ENCODE measurements at regions of chr18 and their contacts with region 1.

Region 1: GRCh38 chr18:23131693-23132319 is 3.5 kb upstream of the CABLES1 start:
- DNase-seq: peak; percentile 51 to 62
- H3K4me3 ChIP-seq: no peak overlapping the region
- H3K27ac ChIP-seq: peak overlapping the region in 1 of 3 donors; percentile 16
- H3K4me1 ChIP-seq: peaks cover 18 to 20% of the 10 kb centered on the region in 2 donors
- H3K27me3 ChIP-seq: no peaks in the 10 kb centered on the region
- CTCF ChIP-seq: peak; percentile 75 to 82 (median 78)
- POLR2A ChIP-seq: no peak

Region 2: DNA sequence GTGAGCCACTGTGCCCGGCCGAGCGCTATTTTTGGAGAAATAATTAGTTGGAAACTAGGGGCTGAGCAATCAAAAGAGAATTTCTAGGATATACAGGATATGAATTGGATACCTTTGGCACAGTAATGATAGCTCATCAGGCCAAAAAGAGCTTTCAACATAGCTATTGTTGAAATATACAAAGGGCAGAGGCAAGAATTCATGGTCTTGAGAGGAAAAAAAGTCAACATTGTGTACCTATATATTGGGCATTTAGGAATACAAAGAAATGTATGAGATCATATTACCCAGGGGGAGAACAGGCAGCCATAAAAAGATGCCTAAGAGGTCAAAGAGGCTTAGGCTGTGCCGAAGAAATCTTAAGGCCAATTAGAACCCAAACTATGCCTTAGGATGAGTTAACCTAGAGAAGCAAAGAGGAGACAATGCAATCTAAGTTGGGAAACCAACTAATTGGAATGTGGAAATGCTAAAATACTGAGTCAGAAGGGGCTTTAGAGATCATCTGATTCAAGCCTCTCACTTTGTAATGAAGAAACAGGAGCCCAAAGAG is 99.7 kb before region 1 on chr18:
- intact Hi-C with region 1: loop called (anchors 10 kb)
- DNase-seq: no peak
- H3K4me3 ChIP-seq: no peak overlapping the region
- H3K27ac ChIP-seq: no peak overlapping the region
- H3K4me1 ChIP-seq: no peaks in the 10 kb centered on the region
- H3K27me3 ChIP-seq: no peaks in the 10 kb centered on the region
- CTCF ChIP-seq: no peak
- POLR2A ChIP-seq: no peak

Region 3: GRCh38 chr18:23099621-23100020 is 32.2 kb before region 1 on chr18:
- intact Hi-C with region 1: no loop called
- DNase-seq: no peak
- H3K4me3 ChIP-seq: no peak overlapping the region
- H3K27ac ChIP-seq: no peak overlapping the region
- H3K4me1 ChIP-seq: peaks cover 0 to 3% of the 10 kb centered on the region in 2 donors
- H3K27me3 ChIP-seq: no peaks in the 10 kb centered on the region
- CTCF ChIP-seq: no peak
- POLR2A ChIP-seq: no peak

Region 4: GRCh38 chr18:23207191-23207955 is 75.6 kb after region 1 on chr18:
- intact Hi-C with region 1: no loop called
- DNase-seq: no peak
- H3K4me3 ChIP-seq: no peak overlapping the region
- H3K27ac ChIP-seq: no peak overlapping the region
- H3K4me1 ChIP-seq: peaks cover 7 to 21% of the 10 kb centered on the region in 2 donors
- H3K27me3 ChIP-seq: no peaks in the 10 kb centered on the region
- CTCF ChIP-seq: peak in 1 of 6 experiments; percentile 8
- POLR2A ChIP-seq: no peak

Region 5: DNA sequence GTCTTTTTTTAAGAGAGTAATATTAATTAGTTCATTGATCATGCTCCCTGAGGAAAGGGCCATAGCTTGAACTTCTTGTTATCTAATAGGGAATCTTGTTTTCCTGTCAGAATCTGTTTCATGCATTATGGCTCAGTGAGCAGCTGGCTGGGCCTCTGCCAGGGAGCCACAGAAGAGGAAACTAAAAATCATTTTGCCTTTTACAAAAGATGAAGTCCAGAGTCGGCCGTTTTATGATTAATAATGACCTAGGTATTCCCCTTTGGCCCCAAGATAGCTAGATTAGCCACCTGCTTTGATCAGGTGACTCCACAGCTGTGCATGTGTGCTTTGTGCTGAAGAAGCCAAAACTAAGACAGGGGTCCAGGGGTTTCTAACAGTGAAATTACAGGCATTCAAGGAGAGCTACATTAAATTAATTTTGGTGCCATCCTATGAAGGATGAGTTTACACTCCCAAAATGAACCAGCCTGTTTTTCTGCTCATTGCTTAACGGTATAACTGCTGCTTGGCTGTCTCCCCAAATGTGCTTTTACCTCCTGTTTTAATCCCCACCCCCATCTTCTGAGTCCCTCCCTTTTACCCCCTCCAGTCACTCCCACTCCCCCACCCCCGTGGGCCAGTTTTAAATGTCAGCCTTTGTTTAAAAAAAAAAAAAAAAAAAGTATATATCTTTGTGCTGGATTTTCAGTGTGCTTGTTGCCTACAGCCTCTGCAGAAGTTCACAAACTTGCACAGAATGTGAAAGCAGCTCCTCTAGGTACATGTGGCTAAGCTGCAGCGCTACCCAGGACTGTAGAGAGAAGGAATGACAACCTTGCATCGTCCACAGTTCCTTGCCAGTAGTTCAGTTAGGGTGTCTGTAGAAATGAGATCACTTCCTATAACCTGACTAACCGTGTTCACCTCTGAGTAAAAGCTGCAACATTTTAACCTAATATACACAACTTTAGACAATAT is 96.6 kb after region 1 on chr18:
- intact Hi-C with region 1: loop called (anchors 10 kb)
- DNase-seq: peak; percentile 59 to 62
- H3K4me3 ChIP-seq: no peak overlapping the region
- H3K27ac ChIP-seq: peak overlapping the region; percentile 32 to 85 (median 66)
- H3K4me1 ChIP-seq: peaks cover 17 to 33% of the 10 kb centered on the region in 2 donors
- H3K27me3 ChIP-seq: no peaks in the 10 kb centered on the region
- CTCF ChIP-seq: no peak
- POLR2A ChIP-seq: no peak

Region 6: DNA sequence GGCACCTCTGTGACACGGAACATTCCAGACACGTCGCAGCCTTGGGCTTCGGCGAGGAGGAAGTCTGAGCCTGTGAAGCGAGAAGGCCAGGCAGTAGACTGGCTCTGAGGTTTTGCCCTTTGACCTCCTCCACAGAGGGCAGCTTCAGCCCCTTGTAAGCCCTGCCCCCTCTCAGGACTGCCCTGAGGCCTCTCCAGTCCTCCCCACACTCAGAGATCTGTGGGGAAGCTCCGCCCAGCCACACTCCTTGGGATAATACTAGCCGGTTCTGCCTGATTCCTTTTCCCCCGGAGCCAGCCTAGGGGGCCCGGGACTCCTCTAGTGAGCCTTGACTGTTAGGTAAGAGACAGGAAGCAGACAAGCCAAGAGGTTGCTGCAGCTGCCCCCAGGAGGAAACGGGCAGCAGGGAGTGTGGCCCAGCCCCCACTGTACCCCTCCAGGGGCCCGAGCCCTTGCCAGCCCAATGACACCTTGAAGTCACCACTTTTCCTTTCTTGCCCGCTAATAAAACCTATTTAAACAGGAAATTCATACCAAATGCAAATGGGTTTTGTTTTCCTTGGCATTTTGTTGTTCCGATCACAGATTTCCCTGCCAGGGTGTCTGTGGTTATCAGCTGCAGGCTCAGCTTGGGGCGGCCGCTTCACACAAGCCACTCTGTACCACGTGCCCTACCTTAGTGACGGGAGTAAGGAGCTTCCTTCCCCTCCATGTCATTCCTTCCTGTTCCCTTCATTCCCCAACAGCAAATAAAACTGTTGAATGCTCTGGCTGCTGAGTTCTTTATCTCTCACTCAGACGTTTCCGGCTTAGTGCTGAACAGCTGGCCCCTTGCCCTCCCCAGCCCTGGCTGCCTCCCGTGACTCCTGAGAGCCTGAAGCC is 128.1 kb after region 1 on chr18:
- intact Hi-C with region 1: loop called (anchors 10 kb)
- DNase-seq: peak; percentile 99
- H3K4me3 ChIP-seq: no peak overlapping the region
- H3K27ac ChIP-seq: peak overlapping the region; percentile 95 to 97 (median 97)
- H3K4me1 ChIP-seq: peaks cover 46 to 58% of the 10 kb centered on the region in 2 donors
- H3K27me3 ChIP-seq: no peaks in the 10 kb centered on the region
- CTCF ChIP-seq: no peak
- POLR2A ChIP-seq: peak in 1 of 2 donors; percentile 43

Region 7: DNA sequence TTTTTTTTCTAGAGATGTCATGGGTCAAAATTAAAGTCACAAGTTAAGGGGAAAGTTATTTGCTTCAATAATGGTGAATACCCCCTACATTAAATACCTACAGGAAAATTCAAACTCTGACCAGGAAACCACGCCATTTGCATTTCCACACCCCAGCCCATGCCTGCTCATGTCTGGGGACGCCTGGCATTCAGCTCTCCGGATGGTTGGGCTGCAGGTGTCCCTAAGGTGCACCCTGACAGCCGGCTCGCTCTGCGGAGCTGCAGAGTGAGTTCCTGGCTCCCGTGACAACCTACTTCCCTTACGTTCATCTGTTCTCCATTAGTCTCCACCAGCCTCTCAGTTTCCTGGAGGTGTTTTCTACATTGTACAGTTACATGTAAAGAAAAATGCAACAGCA is 198.6 kb after region 1 on chr18:
- intact Hi-C with region 1: no loop called
- DNase-seq: no peak
- H3K4me3 ChIP-seq: no peak overlapping the region
- H3K27ac ChIP-seq: no peak overlapping the region
- H3K4me1 ChIP-seq: peaks cover 0 to under 1% of the 10 kb centered on the region in 2 donors
- H3K27me3 ChIP-seq: no peaks in the 10 kb centered on the region
- CTCF ChIP-seq: no peak
- POLR2A ChIP-seq: no peak

Measured in thyroid gland (tissue), 4 donors.